Common myeloid progenitor, CD34-positive (primary cell): ENCODE measurements at regions of chr17 and their contacts with region 1.

Region 1: GRCh38 chr17:19362277-19363113 is at the start of gene B9D1:
- DNase-seq: peak; percentile 85 to 90 (median 89)
- H3K4me3 ChIP-seq: peak within 1 kb of the TSS; percentile 28 to 78 (median 63)
- H3K27ac ChIP-seq: peak within 1 kb of the TSS in 1 of 2 experiments; percentile 21
- H3K4me1 ChIP-seq: peaks cover 0 to 10% (median 10%) of the 10 kb centered on the region in 4 experiments
- H3K27me3 ChIP-seq: peaks cover 0 to 70% (median 25%) of the 10 kb centered on the region in 5 experiments

Region 2: GRCh38 chr17:19338031-19338990 is 24.2 kb before region 1 on chr17:
- CTCF ChIA-PET with region 1: interaction called, 14 read pairs
- POLR2A ChIA-PET with region 1: no interaction called
- DNase-seq: peak; percentile 78 to 90 (median 85)
- H3K4me3 ChIP-seq: no peak overlapping the region
- H3K27ac ChIP-seq: no peak overlapping the region
- H3K4me1 ChIP-seq: no peaks in the 10 kb centered on the region
- H3K27me3 ChIP-seq: peaks cover 0 to 79% (median 28%) of the 10 kb centered on the region in 5 experiments

Region 3: DNA sequence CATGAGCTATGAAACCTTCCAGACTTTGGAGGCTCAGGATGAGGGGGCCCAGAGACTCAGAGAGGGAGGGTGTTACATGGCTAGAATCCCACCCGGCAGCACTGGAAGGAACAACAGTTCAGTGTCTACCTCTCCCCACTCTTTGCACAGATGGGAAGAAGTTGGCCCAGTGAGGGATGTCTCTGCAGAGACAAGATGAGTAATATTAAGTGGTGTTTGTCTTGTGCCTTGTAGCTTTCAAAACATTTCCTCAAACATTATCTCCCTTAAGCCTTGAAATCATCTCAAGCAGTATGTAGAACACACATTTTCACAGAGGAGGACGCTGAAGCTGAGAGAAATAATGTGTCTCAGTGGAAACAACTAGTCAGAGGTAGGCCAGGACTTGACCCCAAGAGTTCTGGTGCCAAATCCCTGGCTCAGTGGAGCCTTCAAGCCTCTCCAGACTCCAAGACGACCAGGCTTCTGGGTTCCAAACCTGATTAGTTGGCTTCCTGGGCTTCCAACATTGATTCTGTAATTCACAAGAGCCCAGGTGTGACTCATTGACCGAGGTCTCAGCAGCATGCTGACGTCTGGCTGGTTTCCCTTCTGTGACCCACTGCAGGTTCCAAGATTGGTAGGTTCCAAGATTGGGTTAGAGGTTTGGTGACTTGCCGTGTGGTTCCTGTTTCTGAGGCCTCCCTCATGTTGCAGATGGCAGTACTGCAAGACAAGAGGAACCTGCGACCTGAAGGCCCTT is 55.9 kb after region 1 on chr17:
- CTCF ChIA-PET with region 1: interaction called, 10 read pairs
- POLR2A ChIA-PET with region 1: no interaction called
- DNase-seq: peak; percentile 67 to 83 (median 80)
- H3K4me3 ChIP-seq: no peak overlapping the region
- H3K27ac ChIP-seq: no peak overlapping the region
- H3K4me1 ChIP-seq: peaks cover 0 to 3% (median 0%) of the 10 kb centered on the region in 4 experiments
- H3K27me3 ChIP-seq: peaks cover 0 to 12% (median 0%) of the 10 kb centered on the region in 5 experiments

Region 4: GRCh38 chr17:19447085-19447583 is 84.6 kb after region 1 on chr17:
- CTCF ChIA-PET with region 1: interaction called, 149 read pairs
- POLR2A ChIA-PET with region 1: no interaction called
- DNase-seq: peak; percentile 63 to 76 (median 64)
- H3K4me3 ChIP-seq: no peak overlapping the region
- H3K27ac ChIP-seq: no peak overlapping the region
- H3K4me1 ChIP-seq: peaks cover 0 to 16% (median 8%) of the 10 kb centered on the region in 4 experiments
- H3K27me3 ChIP-seq: peaks cover 0 to 16% (median 4%) of the 10 kb centered on the region in 5 experiments

Region 5: DNA sequence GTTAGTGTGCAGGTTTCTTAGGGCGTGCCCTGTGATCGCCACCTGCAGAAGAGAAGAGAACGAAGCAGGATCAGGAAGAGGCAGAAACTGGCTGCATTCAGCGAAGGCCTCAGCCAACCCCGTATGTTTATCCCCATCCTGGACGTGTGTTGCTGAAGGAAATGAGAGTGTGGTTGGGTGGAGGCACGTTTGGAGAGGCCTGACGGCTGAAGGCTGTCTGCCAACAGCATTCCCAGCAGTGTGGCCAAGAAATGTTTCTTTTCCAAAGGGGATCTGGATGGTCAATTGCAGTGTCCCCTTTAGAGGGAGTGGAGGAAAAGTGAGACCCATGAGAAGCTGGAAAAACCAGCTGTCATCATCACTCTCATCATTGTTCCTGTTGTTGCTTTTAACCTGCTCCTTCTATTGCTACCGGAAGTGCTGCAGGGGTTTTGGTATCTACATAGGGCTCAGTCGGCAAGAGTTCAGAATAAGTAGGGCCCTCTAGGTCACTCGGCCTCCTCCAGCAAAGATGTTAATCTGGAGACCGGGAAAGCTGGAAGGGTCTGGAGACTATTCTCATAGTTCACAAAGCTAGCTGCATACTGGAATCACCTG is 124.6 kb after region 1 on chr17:
- CTCF ChIA-PET with region 1: no interaction called
- POLR2A ChIA-PET with region 1: no interaction called
- DNase-seq: no peak
- H3K4me3 ChIP-seq: no peak overlapping the region
- H3K27ac ChIP-seq: no peak overlapping the region
- H3K4me1 ChIP-seq: no peaks in the 10 kb centered on the region
- H3K27me3 ChIP-seq: peaks cover 0 to 1% (median 0%) of the 10 kb centered on the region in 5 experiments

Region 6: GRCh38 chr17:19766422-19767270 is 404.2 kb after region 1 on chr17:
- CTCF ChIA-PET with region 1: interaction called, 11 read pairs
- POLR2A ChIA-PET with region 1: no interaction called
- DNase-seq: peak; percentile 46 to 57 (median 56)
- H3K4me3 ChIP-seq: no peak overlapping the region
- H3K27ac ChIP-seq: no peak overlapping the region
- H3K4me1 ChIP-seq: peaks cover 0 to 20% (median 6%) of the 10 kb centered on the region in 4 experiments
- H3K27me3 ChIP-seq: peaks cover 0 to 2% (median 0%) of the 10 kb centered on the region in 5 experiments